Activated CD4-positive, alpha-beta memory T cell treated with anti-CD3 and anti-CD28 coated beads, Interleukin-2, amount 10 ng/mL, durations not matched to agents 7 days and 5 days (primary cell): ENCODE measurements at regions of chr11 and their contacts with region 1.

Region 1: GRCh38 chr11:61639816-61640443 is 40.3 kb upstream of the DAGLA start:
- DNase-seq: no peak
- H3K4me3 Mint-ChIP-seq: no peak overlapping the region
- H3K27ac Mint-ChIP-seq: no peak overlapping the region
- H3K4me1 Mint-ChIP-seq: no peaks in the 10 kb centered on the region
- H3K27me3 Mint-ChIP-seq: peaks cover 5% of the 10 kb centered on the region

Region 2: GRCh38 chr11:61509043-61510029 is 130.6 kb before region 1 on chr11:
- CTCF ChIA-PET with region 1: no interaction called
- POLR2A ChIA-PET with region 1: no interaction called
- DNase-seq: peak; percentile 77
- H3K4me3 Mint-ChIP-seq: peak overlapping the region; percentile 24
- H3K27ac Mint-ChIP-seq: no peak overlapping the region
- H3K4me1 Mint-ChIP-seq: peaks cover 11% of the 10 kb centered on the region
- H3K27me3 Mint-ChIP-seq: peaks cover 50% of the 10 kb centered on the region

Region 3: GRCh38 chr11:61532139-61533038 is 107.5 kb before region 1 on chr11:
- CTCF ChIA-PET with region 1: interaction called, 10 read pairs
- POLR2A ChIA-PET with region 1: no interaction called
- DNase-seq: peak; percentile 51
- H3K4me3 Mint-ChIP-seq: no peak overlapping the region
- H3K27ac Mint-ChIP-seq: no peak overlapping the region
- H3K4me1 Mint-ChIP-seq: no peaks in the 10 kb centered on the region
- H3K27me3 Mint-ChIP-seq: peaks cover 3% of the 10 kb centered on the region

Region 4: DNA sequence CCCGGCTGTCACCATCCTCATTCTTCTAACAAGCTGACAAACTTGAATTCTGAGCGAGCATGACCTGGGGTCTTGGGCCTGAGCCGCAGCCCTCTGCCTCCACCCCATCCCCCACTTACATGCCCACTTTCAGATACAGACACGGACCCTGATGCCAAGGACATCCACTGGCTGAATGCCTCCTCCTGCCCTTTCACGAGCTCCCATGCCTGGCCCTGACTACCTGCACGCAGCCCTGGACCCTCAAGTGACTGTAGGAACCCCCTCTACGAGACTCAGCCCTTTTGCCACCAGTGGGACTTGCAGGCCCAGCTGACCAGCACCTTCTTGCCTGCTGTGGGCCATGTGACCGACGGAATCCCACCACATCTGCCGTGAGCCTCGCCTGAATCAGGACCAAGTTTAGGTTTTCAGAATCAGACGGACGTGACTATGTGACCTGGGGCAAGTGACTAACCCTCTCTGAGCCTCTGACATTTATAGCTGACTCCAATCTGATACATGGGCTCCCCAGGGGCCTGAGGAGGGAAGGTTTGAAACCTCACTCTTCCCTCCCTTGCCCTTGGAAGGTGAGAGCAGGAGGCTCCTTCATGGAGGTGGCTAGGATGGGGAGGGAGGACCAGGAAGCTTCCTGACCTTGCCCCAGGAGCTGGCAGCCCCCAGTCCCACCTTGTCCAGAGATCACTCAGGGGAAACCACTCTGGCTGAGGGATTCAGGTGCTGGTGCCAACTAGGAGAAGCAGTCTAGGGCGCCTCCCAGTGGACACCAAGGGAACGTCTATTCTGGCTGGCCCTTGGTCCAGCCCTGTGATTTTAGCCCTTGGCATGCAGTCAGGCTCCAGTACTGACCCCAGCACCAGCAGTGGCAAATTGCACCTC is 12.1 kb before region 1 on chr11:
- CTCF ChIA-PET with region 1: interaction called, 18 read pairs
- POLR2A ChIA-PET with region 1: no interaction called
- DNase-seq: peak; percentile 41
- H3K4me3 Mint-ChIP-seq: no peak overlapping the region
- H3K27ac Mint-ChIP-seq: no peak overlapping the region
- H3K4me1 Mint-ChIP-seq: peaks cover 5% of the 10 kb centered on the region
- H3K27me3 Mint-ChIP-seq: peaks cover 9% of the 10 kb centered on the region

Region 5: GRCh38 chr11:61747192-61747966 is 107.4 kb after region 1 on chr11:
- CTCF ChIA-PET with region 1: no interaction called
- POLR2A ChIA-PET with region 1: no interaction called
- DNase-seq: peak; percentile 63
- H3K4me3 Mint-ChIP-seq: no peak overlapping the region
- H3K27ac Mint-ChIP-seq: no peak overlapping the region
- H3K4me1 Mint-ChIP-seq: peaks cover 2% of the 10 kb centered on the region
- H3K27me3 Mint-ChIP-seq: peaks cover 19% of the 10 kb centered on the region